ENCODE measurements at regions of chr1 and their contacts with region 1.

Region 1: DNA sequence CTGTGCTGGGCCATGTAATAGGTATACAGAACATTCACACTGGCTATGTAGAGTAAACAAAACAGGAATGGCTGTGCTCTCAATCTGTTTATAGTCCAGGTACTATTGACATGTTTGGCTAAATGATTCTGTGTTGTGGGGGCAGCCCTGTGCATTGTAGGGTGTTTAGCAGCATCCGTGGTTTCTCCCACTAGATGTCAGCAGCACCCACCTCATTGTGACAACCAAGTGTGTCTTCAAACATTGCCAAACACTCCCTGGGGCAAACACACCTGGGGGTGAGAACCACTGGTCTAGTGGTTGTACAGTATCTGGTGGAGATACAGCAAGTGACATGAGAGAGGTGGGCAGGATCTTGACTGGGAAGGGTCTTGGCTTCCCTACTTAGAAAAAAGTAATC is 80.4 kb upstream of the SPATA6 start:
- DNase-seq: peak; percentile 42
- H3K4me3 Mint-ChIP-seq: no peak overlapping the region
- H3K27ac Mint-ChIP-seq: no peak overlapping the region
- H3K4me1 Mint-ChIP-seq: no peaks in the 10 kb centered on the region
- H3K27me3 Mint-ChIP-seq: peaks cover 72% of the 10 kb centered on the region
- CTCF ChIP-seq: no peak

Region 2: DNA sequence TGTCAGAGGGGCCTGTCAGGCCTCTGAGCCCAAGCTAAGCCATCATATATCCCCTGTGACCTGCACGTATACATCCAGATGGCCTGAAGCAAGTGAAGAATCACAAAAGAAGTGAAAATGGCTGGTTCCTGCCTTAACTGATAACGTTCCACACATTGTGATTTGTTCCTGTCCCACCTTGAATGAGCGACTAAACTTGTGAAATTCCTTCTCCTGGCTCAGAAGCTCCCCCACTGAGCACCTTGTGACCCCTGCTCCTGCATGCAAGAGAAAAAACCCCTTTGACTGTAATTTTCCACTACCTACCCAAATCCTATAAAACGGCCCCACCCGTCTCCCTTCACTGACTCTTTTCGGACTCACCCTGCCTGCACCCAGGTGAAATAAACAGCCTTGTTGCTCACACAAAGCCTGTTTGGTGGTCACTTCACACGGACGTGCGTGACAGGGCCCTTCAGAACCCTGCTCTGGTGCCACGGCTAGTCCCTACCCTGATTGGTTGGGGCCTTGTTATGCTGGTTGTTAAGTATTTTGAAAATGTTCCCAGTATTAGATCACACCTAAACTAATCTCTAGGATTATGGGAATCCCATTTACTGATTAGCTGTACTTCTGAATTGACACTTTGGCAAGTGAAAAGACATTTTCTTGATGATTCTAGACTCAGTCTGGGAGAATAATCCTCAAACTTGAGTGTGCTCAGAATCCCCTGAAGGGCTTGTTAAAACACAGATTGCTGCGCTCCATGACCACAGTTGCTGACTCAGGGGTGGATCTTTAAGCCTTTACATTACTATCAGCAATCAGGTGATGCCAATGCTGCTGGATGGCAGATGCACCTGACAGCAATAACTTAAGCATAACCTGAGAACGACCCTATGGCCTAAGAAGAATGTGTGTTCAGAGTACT is 51.6 kb before region 1 on chr1:
- CTCF ChIA-PET with region 1: no interaction called
- intact Hi-C with region 1: no loop called
- DNase-seq: no peak
- H3K4me3 Mint-ChIP-seq: no peak overlapping the region
- H3K27ac Mint-ChIP-seq: no peak overlapping the region
- H3K4me1 Mint-ChIP-seq: peaks cover 12% of the 10 kb centered on the region
- H3K27me3 Mint-ChIP-seq: no peaks in the 10 kb centered on the region
- CTCF ChIP-seq: no peak

Region 3: GRCh38 chr1:48523558-48523957 is 28.9 kb before region 1 on chr1:
- CTCF ChIA-PET with region 1: no interaction called
- intact Hi-C with region 1: no loop called
- DNase-seq: no peak
- H3K4me3 Mint-ChIP-seq: no peak overlapping the region
- H3K27ac Mint-ChIP-seq: no peak overlapping the region
- H3K4me1 Mint-ChIP-seq: peaks cover 9% of the 10 kb centered on the region
- H3K27me3 Mint-ChIP-seq: peaks cover 47% of the 10 kb centered on the region
- CTCF ChIP-seq: no peak

Region 4: GRCh38 chr1:48870596-48870995 is 318.2 kb after region 1 on chr1:
- CTCF ChIA-PET with region 1: no interaction called
- intact Hi-C with region 1: loop called (anchors 10 kb)
- DNase-seq: peak; percentile 32
- H3K4me3 Mint-ChIP-seq: no peak overlapping the region
- H3K27ac Mint-ChIP-seq: no peak overlapping the region
- H3K4me1 Mint-ChIP-seq: no peaks in the 10 kb centered on the region
- H3K27me3 Mint-ChIP-seq: no peaks in the 10 kb centered on the region
- CTCF ChIP-seq: peak; percentile 45

Measured in Calu3 (cell line).